GM12878 (cell line): ENCODE measurements at regions of chr5 and their contacts with region 1.

Region 1: GRCh38 chr5:100731768-100732167 is 171.3 kb downstream of the ST8SIA4 start:
- DNase-seq: peak; percentile 52
- ATAC-seq: peak; percentile 95
- H3K4me3 ChIP-seq: peak overlapping the region; percentile 49
- H3K27ac ChIP-seq: peak overlapping the region; percentile 41; the same call in 1 of the 2 replicates
- H3K4me1 ChIP-seq: peaks cover 3% of the 10 kb centered on the region; the same call in 1 of the 2 replicates
- H3K27me3 ChIP-seq: no peaks in the 10 kb centered on the region
- CTCF ChIP-seq: no peak
- EP300 ChIP-seq: no peak
- POLR2A ChIP-seq: no peak
- RAD21 ChIP-seq: no peak

Region 2: DNA sequence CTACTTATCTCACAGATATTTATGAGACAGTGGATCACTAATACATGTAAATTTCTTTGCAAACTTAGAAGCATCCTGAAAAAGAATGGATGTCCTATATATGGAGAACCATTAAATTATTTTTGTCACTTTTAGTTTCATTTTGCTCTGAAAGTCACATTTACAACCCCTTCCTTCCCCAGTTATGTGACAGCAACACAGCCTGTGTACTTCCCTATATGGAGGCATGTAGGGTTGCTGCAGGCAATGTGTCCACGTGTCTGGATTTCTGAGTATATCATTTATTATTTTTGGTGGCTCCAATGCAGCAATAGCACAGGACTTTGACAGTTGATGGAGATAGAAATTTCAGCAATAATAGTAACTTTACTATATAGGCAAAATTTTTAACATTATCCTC is 15.0 kb after region 1 on chr5:
- CTCF ChIA-PET with region 1: interaction called, 3 read pairs
- POLR2A ChIA-PET with region 1: no interaction called
- RAD21 ChIA-PET with region 1: interaction called, 3 read pairs
- SMC1A ChIA-PET with region 1: interaction called, 29 read pairs
- in situ Hi-C with region 1: no loop called
- intact Hi-C with region 1: no loop called
- DNase-seq: no peak
- ATAC-seq: peak; percentile 94
- H3K4me3 ChIP-seq: 0 out of 2 replicates have a peak overlapping the region, but pooled peaks have one; percentile 0
- H3K27ac ChIP-seq: peak overlapping the region; percentile 52; the same call in 1 of the 2 replicates
- H3K4me1 ChIP-seq: peaks cover 5% of the 10 kb centered on the region; the same call in 1 of the 2 replicates
- H3K27me3 ChIP-seq: no peaks in the 10 kb centered on the region
- CTCF ChIP-seq: no peak
- EP300 ChIP-seq: no peak
- POLR2A ChIP-seq: no peak
- RAD21 ChIP-seq: no peak